Common myeloid progenitor, CD34-positive (primary cell): ENCODE measurements at regions of chr16 and their contacts with region 1.

Region 1: GRCh38 chr16:65671-66137 is 6.7 kb downstream of the RHBDF1 start:
- DNase-seq: peak; percentile 77 to 87 (median 83)
- H3K4me3 ChIP-seq: no peak overlapping the region
- H3K27ac ChIP-seq: no peak overlapping the region
- H3K4me1 ChIP-seq: peaks cover 0 to 10% (median 7%) of the 10 kb centered on the region in 4 experiments
- H3K27me3 ChIP-seq: no peaks in the 10 kb centered on the region

Region 2: DNA sequence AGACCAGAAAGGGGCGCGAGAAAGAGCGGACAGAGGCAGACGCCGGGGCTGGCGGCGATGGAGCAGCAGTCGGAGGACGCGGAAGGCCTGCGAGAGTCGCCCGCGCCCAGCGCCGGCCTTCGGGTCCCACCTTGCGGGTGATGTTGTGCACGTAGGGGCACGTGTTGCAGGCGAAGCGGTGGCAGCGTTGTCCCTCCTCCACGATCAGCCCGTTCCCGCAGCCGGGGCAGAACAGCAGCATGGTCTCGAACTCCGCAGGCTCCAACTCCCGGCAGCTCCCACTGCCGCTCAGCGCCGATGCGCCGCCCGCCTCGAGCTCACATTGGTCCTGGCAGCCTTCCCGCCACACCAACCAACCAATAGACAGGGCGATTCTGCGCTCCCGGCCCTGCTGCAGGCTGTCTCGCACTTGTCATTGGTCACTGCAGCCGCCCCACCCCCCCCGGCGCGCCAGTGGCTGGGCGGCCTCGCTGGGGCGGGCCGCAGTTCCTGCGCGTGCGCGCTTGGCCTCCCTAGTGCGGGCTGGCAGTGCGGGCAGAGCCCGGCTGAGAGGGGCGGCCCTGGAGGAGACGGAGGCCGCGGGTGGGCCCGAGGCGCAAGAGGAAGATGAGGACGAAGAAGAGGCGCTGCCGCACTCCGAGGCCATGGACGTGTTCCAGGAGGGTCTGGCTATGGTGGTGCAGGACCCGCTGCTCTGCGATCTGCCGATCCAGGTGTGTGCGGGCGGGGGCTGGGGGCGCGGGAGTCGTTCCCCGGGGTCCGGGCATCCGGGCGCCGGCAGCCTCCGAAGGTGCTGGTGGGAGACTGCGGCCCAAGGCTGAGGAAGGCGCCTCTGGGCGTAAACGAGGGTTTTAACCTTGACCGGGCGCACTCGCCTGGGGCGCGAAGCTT is 12.1 kb before region 1 on chr16 and contains the starts of genes POLR3K and SNRNP25:
- CTCF ChIA-PET with region 1: interaction called, 20 read pairs
- POLR2A ChIA-PET with region 1: no interaction called
- DNase-seq: peak; percentile 97 to 99 (median 98)
- H3K4me3 ChIP-seq: peak within 1 kb of the TSS; percentile 71 to 93 (median 86)
- H3K27ac ChIP-seq: peak within 1 kb of the TSS; percentile 50 to 73
- H3K4me1 ChIP-seq: peaks cover 3 to 27% (median 12%) of the 10 kb centered on the region in 4 experiments
- H3K27me3 ChIP-seq: no peaks in the 10 kb centered on the region

Region 3: DNA sequence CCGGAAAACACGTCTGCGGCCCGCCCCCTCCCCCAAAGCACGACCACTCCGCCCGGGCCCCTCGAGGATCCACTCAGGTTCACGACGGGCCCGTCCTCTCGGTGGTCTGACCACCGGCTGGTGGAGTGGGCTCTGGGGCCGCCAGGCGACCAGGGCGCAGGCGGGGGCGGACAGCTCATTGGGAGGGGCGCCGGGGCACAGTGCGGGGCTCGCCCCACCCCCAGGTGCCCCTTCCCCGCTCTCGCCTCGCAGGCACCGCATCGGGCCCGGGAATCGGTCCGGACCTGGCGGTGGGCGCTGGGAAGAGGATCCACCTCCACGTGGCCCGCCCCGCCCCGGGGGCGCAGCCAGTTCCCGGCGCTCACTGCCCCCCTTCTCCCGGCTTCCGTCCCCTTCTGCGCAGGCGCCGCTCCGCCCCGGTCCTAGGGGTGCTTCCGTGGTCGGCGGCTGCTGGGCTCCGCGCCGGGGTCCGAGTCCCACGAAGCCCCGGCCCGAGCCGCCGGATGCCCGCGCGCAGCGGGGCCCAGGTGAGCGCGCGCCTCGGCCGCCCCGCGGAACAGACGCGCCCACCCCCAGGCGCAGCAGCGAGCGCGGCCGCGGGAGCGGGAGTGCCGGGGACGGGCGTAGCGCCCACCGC is 12.2 kb after region 1 on chr16 and contains the start of gene MPG:
- CTCF ChIA-PET with region 1: interaction called, 61 read pairs
- POLR2A ChIA-PET with region 1: no interaction called
- DNase-seq: peak; percentile 48 to 56 (median 55)
- H3K4me3 ChIP-seq: peak within 1 kb of the TSS; percentile 62 to 89 (median 73)
- H3K27ac ChIP-seq: peak within 1 kb of the TSS in 1 of 2 experiments; percentile 66
- H3K4me1 ChIP-seq: peaks cover 3 to 72% (median 67%) of the 10 kb centered on the region in 4 experiments
- H3K27me3 ChIP-seq: peaks cover 0 to 7% (median 2%) of the 10 kb centered on the region in 5 experiments

Region 4: DNA sequence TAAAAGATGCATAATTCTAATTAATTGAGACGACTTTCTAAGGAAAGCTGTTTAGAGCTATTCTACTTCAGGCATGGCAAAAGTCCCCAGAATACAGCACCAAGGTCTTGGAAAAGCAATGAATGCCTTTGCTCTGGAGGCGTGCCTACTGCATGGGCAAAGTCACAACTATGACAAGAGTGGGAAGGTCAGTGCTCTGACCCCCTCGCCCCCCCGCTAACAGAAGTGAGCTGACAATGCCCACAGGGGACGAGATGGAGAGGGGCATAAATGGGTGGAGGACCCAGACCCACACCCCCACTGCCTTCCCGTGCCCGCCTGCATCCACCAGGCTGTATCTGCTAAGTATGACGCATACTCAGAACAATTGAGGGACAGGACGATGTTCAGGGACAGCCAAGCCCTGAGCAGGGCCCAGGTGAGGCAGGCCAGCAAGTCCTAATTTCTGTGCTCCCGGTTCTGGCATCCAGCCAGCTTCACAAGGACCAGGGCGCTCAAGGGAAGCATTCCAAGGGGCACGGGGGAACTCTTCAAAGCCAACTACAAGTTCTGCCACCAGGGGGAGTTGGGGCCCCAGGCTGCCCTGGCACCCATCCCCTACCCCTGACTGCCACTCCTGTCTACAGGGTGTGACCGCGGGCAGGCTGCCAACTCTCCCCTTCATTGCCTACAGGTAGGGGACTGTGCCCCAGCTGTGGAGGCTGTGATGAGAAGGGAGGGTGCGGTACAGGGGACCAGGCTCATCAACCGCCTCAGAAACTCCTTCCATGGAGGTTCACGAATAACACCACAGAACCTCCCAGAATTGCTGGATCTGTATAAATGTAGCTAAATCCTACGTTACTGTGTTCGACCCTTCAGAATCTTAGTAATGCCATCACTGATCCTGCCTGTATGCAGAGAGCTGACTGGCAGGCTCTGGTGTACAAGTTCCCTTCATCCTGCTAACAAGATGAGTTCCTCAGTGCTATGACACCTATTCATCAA is 52.0 kb after region 1 on chr16:
- CTCF ChIA-PET with region 1: interaction called, 16 read pairs
- POLR2A ChIA-PET with region 1: no interaction called
- DNase-seq: peak; percentile 72 to 77 (median 73)
- H3K4me3 ChIP-seq: no peak overlapping the region
- H3K27ac ChIP-seq: no peak overlapping the region
- H3K4me1 ChIP-seq: peaks cover 0 to 16% (median 12%) of the 10 kb centered on the region in 4 experiments
- H3K27me3 ChIP-seq: no peaks in the 10 kb centered on the region